Adrenal gland (tissue), 19 donors: ENCODE measurements at regions of chr17 and their contacts with region 1.

Region 1: GRCh38 chr17:22337453-22337852 is 645.1 kb downstream of the KCNJ18 start:
- DNase-seq: no peak
- H3K4me3 ChIP-seq: no peak overlapping the region
- H3K27ac ChIP-seq: no peak overlapping the region
- H3K4me1 ChIP-seq: no peaks in the 10 kb centered on the region
- H3K27me3 ChIP-seq: no peaks in the 10 kb centered on the region
- CTCF ChIP-seq: no peak
- POLR2A ChIP-seq: no peak

Region 2: DNA sequence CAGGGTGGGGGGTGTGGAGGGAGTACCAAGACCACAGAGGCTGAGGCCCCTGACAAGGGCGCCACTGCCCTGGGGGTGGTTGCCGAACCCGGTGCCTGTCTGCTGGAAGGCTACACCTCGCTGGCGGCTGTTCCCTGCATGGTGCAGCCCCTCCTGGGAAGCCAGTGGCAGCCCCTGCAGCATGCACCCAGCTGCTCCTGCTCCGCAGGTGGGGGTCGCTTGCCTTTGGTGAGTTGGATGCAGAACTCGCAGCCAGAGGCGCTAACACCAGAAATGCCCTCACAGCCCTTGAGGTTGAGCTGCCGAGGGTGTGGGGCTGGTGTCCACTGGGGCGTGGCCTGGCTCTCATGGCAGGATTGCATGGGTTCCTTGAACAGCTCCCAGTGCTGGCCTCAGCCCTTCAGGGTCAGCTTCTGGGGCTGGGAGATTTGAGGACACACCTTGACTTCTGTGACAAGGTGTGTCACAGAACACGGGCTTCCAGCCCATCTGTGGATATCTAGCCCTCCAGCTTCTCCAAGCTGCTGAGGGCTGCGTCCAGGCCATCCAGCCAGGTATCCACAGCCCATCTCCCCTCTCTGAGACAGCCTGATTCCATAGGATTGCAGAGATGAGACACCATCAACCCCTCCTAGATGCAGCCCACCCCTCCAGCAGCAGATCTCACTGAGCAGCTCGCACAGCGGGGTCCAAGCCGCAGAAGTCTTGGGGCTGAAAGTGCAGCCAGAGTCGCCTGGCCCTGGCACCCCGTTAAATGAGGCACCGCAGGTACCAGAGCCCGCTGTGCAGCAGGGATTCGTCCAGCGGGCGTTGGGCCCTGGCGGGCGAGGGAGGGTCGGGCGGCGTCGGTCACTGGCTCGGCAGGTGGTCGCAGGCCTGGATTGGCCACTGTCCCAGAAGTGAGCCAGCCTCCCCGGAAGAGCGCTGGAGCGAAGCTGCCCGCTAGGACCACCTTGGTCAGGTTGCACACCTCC is 58.9 kb before region 1 on chr17:
- intact Hi-C with region 1: loop called in 1 of 2 experiments (anchors 10 kb)
- DNase-seq: peak in 1 of 7 donors; percentile 5
- H3K4me3 ChIP-seq: no peak overlapping the region
- H3K27ac ChIP-seq: no peak overlapping the region
- H3K4me1 ChIP-seq: no peaks in the 10 kb centered on the region
- H3K27me3 ChIP-seq: no peaks in the 10 kb centered on the region
- CTCF ChIP-seq: no peak
- POLR2A ChIP-seq: no peak

Region 3: GRCh38 chr17:22717211-22717610 is 379.8 kb after region 1 on chr17:
- intact Hi-C with region 1: no loop called
- DNase-seq: no peak
- H3K4me3 ChIP-seq: no peak overlapping the region
- H3K27ac ChIP-seq: no peak overlapping the region
- H3K4me1 ChIP-seq: no peaks in the 10 kb centered on the region
- H3K27me3 ChIP-seq: no peaks in the 10 kb centered on the region
- CTCF ChIP-seq: no peak
- POLR2A ChIP-seq: no peak